CD8-positive, alpha-beta memory T cell (primary cell): ENCODE measurements at regions of chr5 and their contacts with region 1.

Region 1: GRCh38 chr5:76771705-76772405 is 47.0 kb upstream of the F2RL1 start:
- DNase-seq: no peak
- H3K4me3 ChIP-seq: no peak overlapping the region
- H3K4me3 Mint-ChIP-seq: peak overlapping the region in 1 of 7 donors; percentile 67
- H3K27ac ChIP-seq: no peak overlapping the region
- H3K27ac Mint-ChIP-seq: peak overlapping the region in 1 of 8 donors; percentile 30
- H3K4me1 ChIP-seq: no peaks in the 10 kb centered on the region
- H3K4me1 Mint-ChIP-seq: peaks cover 3 to 5% (median 4%) of the 10 kb centered on the region in 3 donors
- H3K27me3 ChIP-seq: no peaks in the 10 kb centered on the region
- H3K27me3 Mint-ChIP-seq: peaks cover 0 to 3% of the 10 kb centered on the region in 2 donors

Region 2: DNA sequence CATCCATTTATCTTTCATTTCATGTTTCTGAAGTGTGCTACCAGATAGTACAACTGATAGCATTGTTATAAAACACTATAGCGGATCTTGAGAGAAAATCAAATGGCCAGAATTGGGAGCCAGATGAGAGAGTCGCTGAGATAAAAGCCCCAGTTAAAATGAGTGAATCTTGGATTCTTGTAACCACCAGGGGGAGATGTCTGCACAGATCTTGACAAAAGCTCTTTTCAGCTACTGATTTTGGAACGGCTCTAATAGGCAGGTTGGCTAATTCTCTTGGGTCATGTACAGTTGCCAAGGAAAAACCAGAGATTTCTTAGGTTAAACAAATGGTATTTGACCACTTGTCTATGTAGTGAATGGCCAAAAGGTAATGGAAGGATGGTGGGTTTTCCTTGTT is 170.4 kb before region 1 on chr5:
- CTCF ChIA-PET with region 1: interaction called, 85 read pairs
- POLR2A ChIA-PET with region 1: interaction called, 3 read pairs
- DNase-seq: peak in 2 of 5 donors; percentile 30 to 39
- H3K4me3 ChIP-seq: no peak overlapping the region
- H3K4me3 Mint-ChIP-seq: no peak overlapping the region
- H3K27ac ChIP-seq: no peak overlapping the region
- H3K27ac Mint-ChIP-seq: peak overlapping the region in 4 of 8 donors; percentile 19 to 50 (median 38)
- H3K4me1 ChIP-seq: no peaks in the 10 kb centered on the region
- H3K4me1 Mint-ChIP-seq: peaks cover 7 to 19% (median 10%) of the 10 kb centered on the region in 3 donors
- H3K27me3 ChIP-seq: no peaks in the 10 kb centered on the region
- H3K27me3 Mint-ChIP-seq: no peaks in the 10 kb centered on the region

Region 3: DNA sequence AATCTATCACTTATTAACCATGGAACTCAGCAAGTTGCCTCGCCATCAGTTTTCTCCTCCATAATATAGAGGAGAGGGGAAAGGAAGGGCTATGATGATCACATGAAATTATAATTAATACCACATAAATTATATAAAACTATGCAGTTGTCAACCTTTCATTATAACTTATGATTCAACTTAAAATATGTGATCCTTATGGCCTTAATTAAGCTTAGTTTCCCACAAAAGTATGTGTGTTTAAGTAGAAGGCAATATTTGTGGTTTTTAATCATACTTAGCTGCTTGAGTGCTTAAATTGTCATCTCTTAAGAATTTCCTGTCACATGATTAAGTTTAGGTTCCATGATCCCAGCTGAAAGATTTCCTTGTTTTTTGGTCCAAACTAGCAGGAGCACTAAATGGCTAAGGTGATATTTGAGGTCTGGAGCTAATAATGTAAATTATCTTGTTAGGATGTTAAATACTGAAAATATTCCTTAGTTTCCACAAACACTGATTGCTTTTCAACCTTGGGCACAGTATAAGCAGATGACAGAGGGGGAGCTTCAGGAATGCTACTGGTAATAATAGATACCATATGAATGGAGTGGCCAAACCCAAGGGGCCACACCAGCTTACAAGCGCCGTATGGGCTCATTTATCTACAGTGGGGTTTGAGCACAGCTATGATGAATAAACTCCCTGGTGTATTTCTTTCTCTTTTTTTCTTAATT is 82.4 kb before region 1 on chr5:
- CTCF ChIA-PET with region 1: interaction called, 14 read pairs
- POLR2A ChIA-PET with region 1: interaction called, 11 read pairs
- DNase-seq: no peak
- H3K4me3 ChIP-seq: no peak overlapping the region
- H3K4me3 Mint-ChIP-seq: no peak overlapping the region
- H3K27ac ChIP-seq: no peak overlapping the region
- H3K27ac Mint-ChIP-seq: peak overlapping the region in 2 of 8 donors; percentile 47 to 96
- H3K4me1 ChIP-seq: no peaks in the 10 kb centered on the region
- H3K4me1 Mint-ChIP-seq: peaks cover 10 to 13% (median 11%) of the 10 kb centered on the region in 3 donors
- H3K27me3 ChIP-seq: no peaks in the 10 kb centered on the region
- H3K27me3 Mint-ChIP-seq: no peaks in the 10 kb centered on the region

Region 4: GRCh38 chr5:76715736-76716455 is 56.0 kb before region 1 on chr5 and contains the start of gene F2R:
- CTCF ChIA-PET with region 1: interaction called, 79 read pairs
- POLR2A ChIA-PET with region 1: interaction called, 4 read pairs
- DNase-seq: peak; percentile 21 to 81 (median 52)
- H3K4me3 ChIP-seq: peak within 1 kb of the TSS; percentile 77
- H3K4me3 Mint-ChIP-seq: peak within 1 kb of the TSS; percentile 80 to 98 (median 91)
- H3K27ac ChIP-seq: peak within 1 kb of the TSS; percentile 72
- H3K27ac Mint-ChIP-seq: peak within 1 kb of the TSS; percentile 76 to 97 (median 90)
- H3K4me1 ChIP-seq: peaks cover 14% of the 10 kb centered on the region
- H3K4me1 Mint-ChIP-seq: peaks cover 45 to 60% (median 58%) of the 10 kb centered on the region in 3 donors
- H3K27me3 ChIP-seq: no peaks in the 10 kb centered on the region
- H3K27me3 Mint-ChIP-seq: no peaks in the 10 kb centered on the region
- total RNA-seq, gene F2R: 26.6 to 27.4 TPM

Region 5: DNA sequence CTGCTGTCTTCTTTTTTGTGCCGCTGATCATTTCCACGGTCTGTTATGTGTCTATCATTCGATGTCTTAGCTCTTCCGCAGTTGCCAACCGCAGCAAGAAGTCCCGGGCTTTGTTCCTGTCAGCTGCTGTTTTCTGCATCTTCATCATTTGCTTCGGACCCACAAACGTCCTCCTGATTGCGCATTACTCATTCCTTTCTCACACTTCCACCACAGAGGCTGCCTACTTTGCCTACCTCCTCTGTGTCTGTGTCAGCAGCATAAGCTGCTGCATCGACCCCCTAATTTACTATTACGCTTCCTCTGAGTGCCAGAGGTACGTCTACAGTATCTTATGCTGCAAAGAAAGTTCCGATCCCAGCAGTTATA is 38.8 kb before region 1 on chr5:
- CTCF ChIA-PET with region 1: interaction called, 69 read pairs
- POLR2A ChIA-PET with region 1: interaction called, 15 read pairs
- DNase-seq: peak; percentile 11 to 90 (median 59)
- H3K4me3 ChIP-seq: peak overlapping the region; percentile 18
- H3K4me3 Mint-ChIP-seq: peak overlapping the region; percentile 69 to 88 (median 78)
- H3K27ac ChIP-seq: peak overlapping the region; percentile 81
- H3K27ac Mint-ChIP-seq: peak overlapping the region; percentile 82 to 99 (median 95)
- H3K4me1 ChIP-seq: peaks cover 51% of the 10 kb centered on the region
- H3K4me1 Mint-ChIP-seq: peaks cover 56 to 77% (median 70%) of the 10 kb centered on the region in 3 donors
- H3K27me3 ChIP-seq: no peaks in the 10 kb centered on the region
- H3K27me3 Mint-ChIP-seq: no peaks in the 10 kb centered on the region

Region 6: GRCh38 chr5:76782444-76782843 is 10.6 kb after region 1 on chr5:
- CTCF ChIA-PET with region 1: interaction called, 10 read pairs
- POLR2A ChIA-PET with region 1: no interaction called
- DNase-seq: no peak
- H3K4me3 ChIP-seq: no peak overlapping the region
- H3K4me3 Mint-ChIP-seq: no peak overlapping the region
- H3K27ac ChIP-seq: no peak overlapping the region
- H3K27ac Mint-ChIP-seq: peak overlapping the region in 1 of 8 donors; percentile 34
- H3K4me1 ChIP-seq: no peaks in the 10 kb centered on the region
- H3K4me1 Mint-ChIP-seq: no peaks in the 10 kb centered on the region
- H3K27me3 ChIP-seq: no peaks in the 10 kb centered on the region
- H3K27me3 Mint-ChIP-seq: peaks cover 2 to 7% of the 10 kb centered on the region in 2 donors

Region 7: GRCh38 chr5:76999423-76999822 is 227.6 kb after region 1 on chr5:
- CTCF ChIA-PET with region 1: no interaction called
- POLR2A ChIA-PET with region 1: no interaction called
- DNase-seq: no peak
- H3K4me3 ChIP-seq: no peak overlapping the region
- H3K4me3 Mint-ChIP-seq: no peak overlapping the region
- H3K27ac ChIP-seq: no peak overlapping the region
- H3K27ac Mint-ChIP-seq: no peak overlapping the region
- H3K4me1 ChIP-seq: no peaks in the 10 kb centered on the region
- H3K4me1 Mint-ChIP-seq: no peaks in the 10 kb centered on the region
- H3K27me3 ChIP-seq: no peaks in the 10 kb centered on the region
- H3K27me3 Mint-ChIP-seq: peaks cover 14 to 44% of the 10 kb centered on the region in 2 donors